ENCODE measurements at regions of chr5 and their contacts with region 1.

Region 1: GRCh38 chr5:73448463-73449136 is at the start of gene FOXD1:
- DNase-seq: peak; percentile 49
- H3K4me3 Mint-ChIP-seq: peak within 1 kb of the TSS; percentile 77
- H3K27ac Mint-ChIP-seq: no peak within 1 kb of the TSS
- H3K4me1 Mint-ChIP-seq: peaks cover 2% of the 10 kb centered on the region
- H3K27me3 Mint-ChIP-seq: peaks cover 72% of the 10 kb centered on the region
- total RNA-seq, gene FOXD1: 0.12 TPM

Region 2: GRCh38 chr5:72920690-72921502 is 527.7 kb before region 1 on chr5:
- CTCF ChIA-PET with region 1: no interaction called
- intact Hi-C with region 1: loop called (anchors 2 kb)
- DNase-seq: no peak
- H3K4me3 Mint-ChIP-seq: no peak overlapping the region
- H3K27ac Mint-ChIP-seq: no peak overlapping the region
- H3K4me1 Mint-ChIP-seq: no peaks in the 10 kb centered on the region
- H3K27me3 Mint-ChIP-seq: peaks cover 5% of the 10 kb centered on the region

Region 3: GRCh38 chr5:73088026-73088425 is 360.6 kb before region 1 on chr5:
- CTCF ChIA-PET with region 1: no interaction called
- intact Hi-C with region 1: loop called (anchors 2 kb)
- DNase-seq: no peak
- H3K4me3 Mint-ChIP-seq: no peak overlapping the region
- H3K27ac Mint-ChIP-seq: no peak overlapping the region
- H3K4me1 Mint-ChIP-seq: no peaks in the 10 kb centered on the region
- H3K27me3 Mint-ChIP-seq: peaks cover 20% of the 10 kb centered on the region

Region 4: DNA sequence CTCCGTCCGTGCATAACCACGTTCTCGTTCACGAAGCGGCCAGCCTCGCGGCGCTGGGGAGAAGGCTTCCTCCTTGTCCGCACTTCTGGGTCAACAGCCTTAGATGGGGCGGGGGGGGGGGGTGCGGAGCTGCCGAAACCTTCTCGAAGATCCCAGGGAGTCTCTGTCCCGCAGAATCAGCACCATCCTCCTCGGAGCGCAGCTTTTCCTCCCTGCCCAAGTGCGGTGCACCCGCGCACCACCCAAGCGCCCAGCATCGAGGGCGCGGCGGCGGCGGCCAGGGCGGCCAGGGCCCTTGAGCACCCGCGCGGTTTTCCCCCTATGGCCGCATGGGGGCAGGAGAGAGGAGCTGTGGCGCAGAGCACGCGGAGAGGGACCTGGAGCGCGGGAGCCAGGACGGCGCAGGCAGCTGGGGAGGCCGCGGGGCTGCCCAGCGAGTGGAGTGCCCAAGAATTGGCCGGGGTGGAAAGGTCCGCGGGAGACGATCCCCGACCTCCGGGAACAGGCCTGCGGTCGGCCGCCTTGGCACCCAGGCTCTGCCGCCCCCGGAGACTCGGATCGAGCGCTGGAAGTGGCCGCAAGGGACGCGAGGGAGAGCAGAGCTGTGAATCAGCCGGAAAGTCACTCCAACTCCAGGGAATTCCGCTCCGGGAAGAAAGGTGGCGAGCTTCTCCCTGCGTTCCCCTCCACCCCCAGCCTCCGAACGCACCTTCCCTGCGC is 232.5 kb before region 1 on chr5:
- CTCF ChIA-PET with region 1: interaction called, 7 read pairs
- intact Hi-C with region 1: loop called (anchors 1 kb)
- DNase-seq: peak; percentile 77
- H3K4me3 Mint-ChIP-seq: no peak overlapping the region
- H3K27ac Mint-ChIP-seq: no peak overlapping the region
- H3K4me1 Mint-ChIP-seq: peaks cover 17% of the 10 kb centered on the region
- H3K27me3 Mint-ChIP-seq: peaks cover 84% of the 10 kb centered on the region

Region 5: DNA sequence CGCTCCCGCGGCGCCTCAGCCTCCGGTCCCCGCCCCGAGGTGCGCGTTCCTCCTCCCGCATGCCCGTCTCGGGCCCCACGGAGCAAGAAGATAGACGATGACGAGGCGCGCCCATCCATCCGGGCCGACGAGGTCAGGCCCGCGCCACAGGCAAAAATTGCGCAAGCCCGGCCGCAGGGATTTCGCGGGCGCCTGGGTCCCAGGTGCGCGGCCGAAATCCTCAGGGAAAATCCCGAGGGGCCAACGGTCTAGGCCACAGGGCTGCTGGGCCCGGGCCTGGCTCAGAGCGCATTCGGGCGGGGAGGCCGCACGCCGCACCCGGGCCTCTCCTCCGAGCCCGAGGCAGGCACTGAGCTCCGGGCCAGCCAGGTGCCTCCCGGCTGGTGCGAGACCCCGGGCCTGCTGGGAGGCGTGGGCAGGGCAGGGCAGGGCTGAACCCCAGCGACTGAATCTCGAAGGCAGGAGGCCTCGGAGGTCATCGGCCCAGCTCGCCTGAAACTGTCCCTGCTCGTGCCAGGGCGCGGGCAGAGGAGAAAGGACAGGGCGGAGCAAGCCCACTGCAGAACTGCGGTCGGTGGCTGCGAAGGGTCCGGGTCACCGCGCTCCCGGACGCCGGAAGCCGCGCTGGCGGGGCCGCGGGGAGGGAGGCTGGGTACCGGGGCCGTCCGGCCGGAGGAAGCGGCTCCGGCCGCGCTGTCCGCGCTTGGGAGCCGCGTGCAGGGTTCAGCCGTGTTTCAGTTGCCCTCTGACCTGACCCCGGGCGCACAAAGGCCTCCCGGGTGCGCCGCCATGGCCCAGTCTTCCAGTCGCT is 66.8 kb before region 1 on chr5:
- CTCF ChIA-PET with region 1: interaction called, 3 read pairs
- intact Hi-C with region 1: loop called (anchors 2 kb)
- DNase-seq: no peak
- H3K4me3 Mint-ChIP-seq: no peak overlapping the region
- H3K27ac Mint-ChIP-seq: no peak overlapping the region
- H3K4me1 Mint-ChIP-seq: peaks cover 17% of the 10 kb centered on the region
- H3K27me3 Mint-ChIP-seq: peaks cover 66% of the 10 kb centered on the region

Region 6: DNA sequence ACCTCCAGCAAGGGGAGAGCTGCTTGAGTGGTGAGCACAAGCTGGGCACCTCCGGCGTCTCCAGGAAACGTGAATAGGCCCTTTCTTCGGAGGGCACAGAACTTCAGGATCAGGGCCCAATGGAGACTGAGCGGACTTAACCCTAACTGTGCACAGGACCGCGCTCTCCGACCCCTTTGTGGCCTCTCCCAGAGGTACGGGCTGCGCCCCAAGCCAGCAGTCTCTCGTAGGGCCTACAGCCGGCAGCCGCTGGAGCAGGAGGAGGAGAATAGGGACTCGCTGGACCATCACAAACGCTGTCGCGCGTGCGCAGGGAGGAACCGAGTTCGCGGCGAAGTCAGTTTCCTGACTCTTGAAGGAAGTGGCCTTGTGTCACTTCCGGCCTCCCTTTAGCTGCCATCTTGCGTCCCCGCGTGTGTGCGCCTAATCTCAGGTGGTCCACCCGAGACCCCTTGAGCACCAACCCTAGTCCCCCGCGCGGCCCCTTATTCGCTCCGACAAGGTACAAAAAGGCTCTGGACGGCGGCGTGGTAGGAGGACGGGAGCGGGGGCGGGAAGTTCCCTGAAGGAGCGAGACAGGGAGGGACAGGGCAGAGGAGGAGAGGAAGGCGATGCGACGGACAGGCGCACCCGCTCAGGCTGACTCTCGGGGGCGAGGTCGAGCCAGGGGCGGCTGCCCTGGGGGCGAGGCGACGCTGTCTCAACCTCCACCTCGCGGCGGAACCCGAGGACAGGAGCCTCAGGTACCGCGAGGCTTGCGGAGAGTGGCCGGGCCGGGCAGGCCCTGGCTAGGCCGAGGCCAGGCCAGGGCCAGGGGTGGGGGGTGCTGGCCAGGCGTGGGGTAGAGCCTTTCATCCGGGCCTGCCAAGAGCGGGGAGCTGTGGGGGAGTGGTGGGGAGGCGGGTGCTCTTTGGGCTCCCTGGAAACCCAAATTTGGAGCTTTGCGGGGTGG is 49.7 kb after region 1 on chr5 and contains the start of gene BTF3:
- CTCF ChIA-PET with region 1: interaction called, 3 read pairs
- intact Hi-C with region 1: loop called (anchors 2 kb)
- DNase-seq: peak; percentile 95
- H3K4me3 Mint-ChIP-seq: peak within 1 kb of the TSS; percentile 97
- H3K27ac Mint-ChIP-seq: peak within 1 kb of the TSS; percentile 96
- H3K4me1 Mint-ChIP-seq: peaks cover 42% of the 10 kb centered on the region
- H3K27me3 Mint-ChIP-seq: peaks cover 3% of the 10 kb centered on the region
- total RNA-seq, gene BTF3: 1,100 to 1,123 TPM

Measured in activated naive CD4-positive, alpha-beta T cell treated with anti-CD3 and anti-CD28 coated beads for 36 hours (primary cell).